ENCODE measurements at regions of chr4 and their contacts with region 1.

Region 1: DNA sequence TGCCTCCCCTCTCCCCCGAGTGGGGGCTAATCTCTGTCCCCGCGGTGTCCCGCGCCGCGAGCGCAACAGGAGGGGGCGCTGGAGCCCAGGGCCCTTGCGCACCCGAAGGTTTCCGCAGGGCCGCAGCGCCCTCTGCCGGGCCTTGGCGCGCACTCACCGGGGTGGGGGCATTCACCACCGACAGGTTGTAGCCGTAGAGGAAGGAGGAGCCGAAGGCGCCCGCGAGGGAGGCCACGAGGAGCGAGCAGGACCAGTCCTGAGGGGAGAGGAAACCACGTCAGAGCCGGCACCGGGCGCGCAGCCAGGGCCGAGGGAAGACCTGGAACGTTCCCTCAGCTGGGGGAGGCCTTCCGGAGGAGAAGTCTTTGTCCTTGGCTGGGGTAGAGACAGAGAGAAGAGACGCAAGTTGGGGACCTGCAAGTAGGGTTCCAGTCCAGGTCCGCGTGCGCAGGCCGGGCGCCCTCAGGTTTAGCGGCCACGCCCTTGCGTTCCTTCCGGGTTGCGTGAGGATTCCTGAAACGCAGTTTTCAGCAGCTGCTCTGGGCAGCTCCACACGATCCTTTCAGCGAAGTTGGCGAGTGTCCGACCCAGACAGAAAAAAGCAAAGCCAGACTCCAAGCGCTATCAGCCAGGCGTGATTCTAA is 2.4 kb downstream of the SLC2A9 start:
- DNase-seq: peak; percentile 92 to 93 (median 92)
- ATAC-seq: peak; percentile 98
- H3K4me3 ChIP-seq: peak overlapping the region; percentile 25; the same call in 1 of the 2 replicates
- H3K27ac ChIP-seq: peak overlapping the region; percentile 55
- H3K4me1 ChIP-seq: peaks cover 6 to 12% of the 10 kb centered on the region in 2 experiments; a peak in 4 of 5 replicates
- H3K27me3 ChIP-seq: peaks cover 3 to 10% of the 10 kb centered on the region in 2 experiments; a peak in 3 of 5 replicates
- CTCF ChIP-seq: peak; percentile 99 to 100 (median 100)
- EP300 ChIP-seq: no peak
- POLR2A ChIP-seq: peak; percentile 66
- RAD21 ChIP-seq: peak; percentile 97 to 98

Region 2: DNA sequence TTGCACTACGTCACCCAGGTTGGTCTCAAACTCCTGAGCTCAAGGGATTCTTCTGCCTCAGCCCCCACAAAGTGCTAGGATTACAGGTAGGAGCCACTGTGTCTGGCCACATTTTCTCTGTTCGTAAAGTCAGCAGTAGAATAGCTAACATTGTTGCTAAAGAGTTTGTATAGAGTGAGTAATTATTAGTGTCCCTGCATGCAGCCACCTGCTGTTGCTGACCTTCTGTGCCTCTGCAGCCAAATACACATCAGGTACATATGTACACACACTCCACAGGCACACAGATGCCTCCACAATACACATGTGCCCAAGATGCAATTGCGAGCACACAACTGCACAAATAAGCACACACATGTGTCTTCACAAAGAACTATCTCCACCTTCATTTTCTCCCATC is 226.6 kb before region 1 on chr4:
- CTCF ChIA-PET with region 1: no interaction called
- POLR2A ChIA-PET with region 1: no interaction called
- in situ Hi-C with region 1: no loop called
- intact Hi-C with region 1: no loop called
- DNase-seq: no peak
- ATAC-seq: no peak
- H3K4me3 ChIP-seq: no peak overlapping the region
- H3K27ac ChIP-seq: no peak overlapping the region
- H3K4me1 ChIP-seq: no peaks in the 10 kb centered on the region
- H3K27me3 ChIP-seq: no peaks in the 10 kb centered on the region
- CTCF ChIP-seq: no peak
- EP300 ChIP-seq: no peak
- POLR2A ChIP-seq: no peak
- RAD21 ChIP-seq: no peak

Region 3: GRCh38 chr4:9825049-9825448 is 193.9 kb before region 1 on chr4:
- CTCF ChIA-PET with region 1: no interaction called
- POLR2A ChIA-PET with region 1: no interaction called
- in situ Hi-C with region 1: no loop called
- intact Hi-C with region 1: no loop called
- DNase-seq: no peak
- ATAC-seq: no peak
- H3K4me3 ChIP-seq: no peak overlapping the region
- H3K27ac ChIP-seq: no peak overlapping the region
- H3K4me1 ChIP-seq: no peaks in the 10 kb centered on the region
- H3K27me3 ChIP-seq: no peaks in the 10 kb centered on the region
- CTCF ChIP-seq: no peak
- EP300 ChIP-seq: no peak
- POLR2A ChIP-seq: no peak
- RAD21 ChIP-seq: no peak

Region 4: DNA sequence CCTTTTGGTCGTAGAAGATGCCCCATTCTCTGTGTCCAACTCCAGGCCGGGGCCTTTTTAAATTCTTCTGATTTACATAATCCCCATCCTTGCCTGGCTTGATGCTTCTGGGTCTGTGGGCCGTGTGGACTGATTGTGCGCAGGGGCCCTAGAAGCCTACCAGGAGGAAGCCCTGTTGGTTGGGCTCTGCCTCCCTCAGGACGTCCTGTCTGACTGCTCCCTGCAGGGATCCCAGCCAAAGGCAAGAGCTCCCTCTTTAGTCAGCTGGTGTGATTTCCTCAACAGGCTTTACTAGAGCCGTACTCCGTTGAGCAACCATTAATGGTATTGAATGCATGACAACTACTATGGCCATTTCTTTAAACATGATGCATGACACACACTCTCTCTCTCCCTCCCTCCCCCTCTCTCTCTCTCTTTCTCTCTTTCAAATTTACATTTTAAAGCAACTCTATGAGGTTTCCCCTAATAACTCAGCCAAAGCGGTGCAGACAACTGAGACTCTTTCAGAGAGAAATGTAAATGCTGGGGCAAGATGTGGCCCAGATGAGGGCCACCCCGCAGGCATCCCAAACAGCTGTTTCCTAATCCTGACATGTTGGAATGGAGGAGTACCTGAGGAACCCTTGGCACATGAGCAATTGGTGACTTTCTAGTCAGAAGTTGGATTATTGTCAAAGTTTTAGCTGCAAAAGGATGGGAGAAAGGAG is 120.2 kb before region 1 on chr4:
- CTCF ChIA-PET with region 1: interaction called, 4 read pairs
- POLR2A ChIA-PET with region 1: no interaction called
- in situ Hi-C with region 1: no loop called
- intact Hi-C with region 1: loop called (anchors 5 kb)
- DNase-seq: peak in 2 of 4 experiments; percentile 22 to 33
- ATAC-seq: peak; percentile 90
- H3K4me3 ChIP-seq: no peak overlapping the region
- H3K27ac ChIP-seq: no peak overlapping the region
- H3K4me1 ChIP-seq: no peaks in the 10 kb centered on the region; a peak in 1 of 5 replicates
- H3K27me3 ChIP-seq: peaks cover 0 to 5% of the 10 kb centered on the region in 2 experiments; a peak in 1 of 5 replicates
- CTCF ChIP-seq: peak; percentile 53 to 66 (median 66)
- EP300 ChIP-seq: no peak
- POLR2A ChIP-seq: no peak
- RAD21 ChIP-seq: peak; percentile 49 to 71

Region 5: DNA sequence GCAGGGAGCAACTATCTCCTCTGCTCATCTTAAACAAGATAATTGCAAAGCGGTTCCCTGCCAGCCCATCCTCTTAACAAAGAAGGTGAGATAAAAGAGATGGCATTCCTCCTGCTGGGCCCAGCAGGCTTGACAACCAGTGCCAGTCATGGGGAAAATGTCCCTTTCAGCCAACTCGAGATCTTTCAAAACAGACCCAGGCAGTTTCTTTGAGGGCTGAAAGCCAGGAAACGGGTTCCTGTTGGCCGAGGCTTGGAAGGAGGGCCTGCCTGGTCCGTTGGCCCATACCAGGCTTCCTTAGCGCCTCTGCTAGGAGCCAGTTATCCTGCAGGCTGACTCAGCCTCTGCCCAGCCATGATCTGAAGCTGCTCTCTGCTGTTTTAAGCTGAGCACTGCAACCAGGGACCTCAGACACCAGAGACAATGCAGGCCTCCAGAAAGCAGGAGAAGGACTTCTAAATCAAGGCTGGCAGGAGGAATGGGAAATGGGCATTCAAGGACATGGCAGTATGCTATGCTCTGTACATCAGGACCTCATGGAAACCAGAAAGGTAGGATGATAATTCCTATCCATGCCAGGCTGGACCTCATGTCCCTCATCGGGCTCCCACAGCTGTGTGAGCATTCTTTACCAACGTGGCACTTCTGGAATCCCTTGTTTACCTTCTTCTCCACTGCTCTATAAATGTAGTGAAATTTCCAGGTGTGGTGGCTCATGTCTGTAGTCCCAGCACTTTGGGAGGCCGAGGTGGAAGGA is 44.8 kb after region 1 on chr4:
- CTCF ChIA-PET with region 1: interaction called, 20 read pairs
- POLR2A ChIA-PET with region 1: no interaction called
- in situ Hi-C with region 1: no loop called
- intact Hi-C with region 1: loop called (anchors 2 kb)
- DNase-seq: peak in 1 of 4 experiments; percentile 34
- ATAC-seq: peak; percentile 92
- H3K4me3 ChIP-seq: no peak overlapping the region
- H3K27ac ChIP-seq: no peak overlapping the region
- H3K4me1 ChIP-seq: no peaks in the 10 kb centered on the region
- H3K27me3 ChIP-seq: peaks cover 7 to 19% of the 10 kb centered on the region in 2 experiments; a peak in 4 of 5 replicates
- CTCF ChIP-seq: peak; percentile 62 to 76 (median 74)
- EP300 ChIP-seq: no peak
- POLR2A ChIP-seq: no peak
- RAD21 ChIP-seq: peak; percentile 61 to 80

Region 6: DNA sequence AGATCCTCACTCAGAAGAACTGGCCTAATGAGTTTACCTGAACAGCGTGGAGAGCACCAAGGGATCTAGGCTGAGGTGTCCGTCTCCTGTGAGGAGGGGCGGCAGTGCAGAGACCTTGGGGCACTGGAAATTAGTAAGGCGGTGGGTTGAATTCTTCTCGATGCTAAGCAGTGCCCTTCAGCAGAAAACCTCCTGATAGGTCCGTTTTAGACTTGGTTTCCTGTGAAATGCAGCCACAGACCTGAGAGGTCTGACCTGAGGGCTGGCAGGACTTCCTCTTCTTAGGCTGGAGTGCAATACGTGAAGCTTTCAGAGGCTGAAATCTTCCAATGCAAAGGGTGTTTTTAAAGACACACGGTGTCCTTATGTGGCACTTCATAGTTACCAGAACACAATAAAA is 665.7 kb after region 1 on chr4 and contains the start of gene CLNK:
- CTCF ChIA-PET with region 1: no interaction called
- POLR2A ChIA-PET with region 1: no interaction called
- in situ Hi-C with region 1: no loop called
- intact Hi-C with region 1: no loop called
- DNase-seq: no peak
- ATAC-seq: no peak
- H3K4me3 ChIP-seq: no peak within 1 kb of the TSS
- H3K27ac ChIP-seq: no peak within 1 kb of the TSS
- H3K4me1 ChIP-seq: no peaks in the 10 kb centered on the region
- H3K27me3 ChIP-seq: no peaks in the 10 kb centered on the region
- CTCF ChIP-seq: no peak
- EP300 ChIP-seq: no peak
- POLR2A ChIP-seq: no peak
- RAD21 ChIP-seq: no peak
- polyA plus RNA-seq, gene CLNK: not detected

Measured in K562 (cell line).